PC-3 (cell line): ENCODE measurements at regions of chr10 and their contacts with region 1.

Region 1: GRCh38 chr10:50421026-50421719 is 169.9 kb upstream of the ASAH2 start:
- DNase-seq: peak; percentile 91
- ATAC-seq: peak; percentile 60
- H3K4me3 ChIP-seq: no peak overlapping the region
- H3K27ac ChIP-seq: no peak overlapping the region
- H3K4me1 ChIP-seq: peaks cover 34% of the 10 kb centered on the region
- H3K27me3 ChIP-seq: no peaks in the 10 kb centered on the region
- CTCF ChIP-seq: peak; percentile 100

Region 2: DNA sequence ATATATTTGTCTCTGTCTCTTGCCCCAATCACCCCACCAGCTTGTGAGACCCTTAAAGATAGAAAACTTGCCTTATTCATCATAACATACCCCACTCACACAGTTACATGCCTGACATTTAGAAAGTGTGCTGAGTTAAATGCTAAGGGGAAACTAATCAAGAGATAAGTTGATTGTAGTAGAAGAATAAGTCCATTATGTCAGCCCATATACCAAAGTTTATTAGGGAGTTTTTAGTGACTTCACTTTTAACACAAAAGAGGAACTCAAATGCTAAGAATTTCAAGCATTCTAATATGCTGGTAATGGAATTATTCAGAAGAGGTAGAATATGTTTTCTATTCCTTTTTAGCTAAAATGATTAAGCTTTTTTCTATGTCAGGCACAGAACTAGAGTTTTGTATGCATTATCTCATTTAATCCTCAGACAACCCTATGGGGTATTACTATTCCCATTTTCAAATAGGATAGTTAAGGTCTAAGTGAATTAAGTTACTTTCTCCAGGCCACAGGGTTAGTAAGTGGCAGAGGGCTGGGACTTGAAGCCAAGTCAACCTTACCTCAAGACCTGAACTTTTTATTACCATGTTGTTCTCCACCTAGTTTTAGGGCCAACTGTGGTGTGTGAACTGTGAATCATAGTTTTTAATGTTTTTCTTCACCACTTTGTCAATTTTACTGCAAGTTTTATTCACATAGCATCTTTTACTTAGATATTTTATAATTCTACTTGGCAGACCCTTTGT is 189.5 kb before region 1 on chr10:
- CTCF ChIA-PET with region 1: no interaction called
- POLR2A ChIA-PET with region 1: no interaction called
- intact Hi-C with region 1: loop called (anchors 5 kb)
- DNase-seq: no peak
- ATAC-seq: peak; percentile 86
- H3K4me3 ChIP-seq: no peak overlapping the region
- H3K27ac ChIP-seq: no peak overlapping the region
- H3K4me1 ChIP-seq: no peaks in the 10 kb centered on the region
- H3K27me3 ChIP-seq: peaks cover 41% of the 10 kb centered on the region
- CTCF ChIP-seq: no peak

Region 3: DNA sequence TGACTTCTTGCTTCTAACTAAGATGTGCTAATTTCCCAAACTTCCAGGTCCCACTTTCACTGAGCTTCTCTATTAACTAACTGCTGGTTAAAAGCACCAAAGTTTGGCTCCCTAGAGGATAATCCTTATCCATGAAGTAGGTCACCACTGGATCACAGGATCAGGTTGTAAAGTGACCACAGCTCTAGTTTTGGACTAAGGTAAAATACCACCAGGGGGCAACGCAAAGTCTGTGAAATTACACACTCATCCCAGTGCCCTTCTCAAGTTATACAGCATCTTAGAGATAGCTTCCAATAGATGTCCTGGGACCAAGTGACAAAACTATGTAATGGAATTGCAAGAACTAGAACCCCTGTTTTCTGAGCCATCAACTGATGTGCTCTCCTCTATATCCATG is 53.4 kb before region 1 on chr10:
- CTCF ChIA-PET with region 1: interaction called, 19 read pairs
- POLR2A ChIA-PET with region 1: no interaction called
- intact Hi-C with region 1: loop called (anchors 1 kb)
- DNase-seq: peak; percentile 94
- ATAC-seq: peak; percentile 89
- H3K4me3 ChIP-seq: no peak overlapping the region
- H3K27ac ChIP-seq: no peak overlapping the region
- H3K4me1 ChIP-seq: peaks cover 12% of the 10 kb centered on the region
- H3K27me3 ChIP-seq: no peaks in the 10 kb centered on the region
- CTCF ChIP-seq: peak; percentile 98